ENCODE measurements at regions of chr17 and their contacts with region 1.

Region 1: GRCh38 chr17:48295362-48296288 is 134.4 kb downstream of the SKAP1 start:
- DNase-seq: peak; percentile 63
- H3K4me3 ChIP-seq: peak overlapping the region; percentile 10
- H3K27ac ChIP-seq: no peak overlapping the region
- H3K4me1 ChIP-seq: peaks cover 13% of the 10 kb centered on the region
- CTCF ChIP-seq: no peak

Region 2: DNA sequence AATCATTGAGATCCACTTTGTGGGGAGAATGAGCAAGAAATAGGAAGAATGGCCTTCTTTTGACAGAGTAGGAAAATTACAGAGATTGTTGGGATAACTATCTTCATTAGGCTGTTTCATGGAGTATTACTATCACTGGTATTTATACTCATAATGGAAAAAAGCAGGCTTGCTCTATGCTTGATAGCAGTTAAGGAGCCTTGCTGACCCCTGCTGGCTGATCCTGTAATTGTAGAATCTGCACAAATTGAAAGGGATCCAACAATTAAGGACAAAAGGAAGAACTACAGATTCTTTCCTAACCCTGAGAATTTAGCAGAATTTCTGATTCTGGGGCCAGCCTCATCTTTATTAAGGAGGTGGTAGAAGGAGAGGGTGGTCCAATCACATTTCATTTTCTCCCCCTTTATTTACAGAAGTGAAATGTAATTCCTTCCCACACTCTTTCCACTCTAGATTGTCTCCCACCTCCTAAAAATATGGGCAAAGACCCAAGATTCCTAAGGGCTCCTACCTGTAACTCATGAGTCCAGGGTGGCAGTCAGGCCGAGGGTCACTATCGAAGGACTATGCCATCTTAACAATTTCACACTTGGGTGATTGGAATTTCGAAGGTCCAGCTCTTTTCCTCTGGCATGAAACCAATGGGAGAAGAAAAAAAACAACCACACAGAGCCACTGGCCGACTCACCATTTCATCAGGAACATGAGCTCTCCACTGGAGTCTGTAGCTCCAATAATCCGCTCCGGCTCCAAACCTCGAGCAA is 221.1 kb before region 1 on chr17:
- CTCF ChIA-PET with region 1: no interaction called
- POLR2A ChIA-PET with region 1: no interaction called
- intact Hi-C with region 1: no loop called
- DNase-seq: peak; percentile 75
- H3K4me3 ChIP-seq: no peak overlapping the region
- H3K27ac ChIP-seq: no peak overlapping the region
- H3K4me1 ChIP-seq: no peaks in the 10 kb centered on the region
- CTCF ChIP-seq: peak; percentile 92

Region 3: DNA sequence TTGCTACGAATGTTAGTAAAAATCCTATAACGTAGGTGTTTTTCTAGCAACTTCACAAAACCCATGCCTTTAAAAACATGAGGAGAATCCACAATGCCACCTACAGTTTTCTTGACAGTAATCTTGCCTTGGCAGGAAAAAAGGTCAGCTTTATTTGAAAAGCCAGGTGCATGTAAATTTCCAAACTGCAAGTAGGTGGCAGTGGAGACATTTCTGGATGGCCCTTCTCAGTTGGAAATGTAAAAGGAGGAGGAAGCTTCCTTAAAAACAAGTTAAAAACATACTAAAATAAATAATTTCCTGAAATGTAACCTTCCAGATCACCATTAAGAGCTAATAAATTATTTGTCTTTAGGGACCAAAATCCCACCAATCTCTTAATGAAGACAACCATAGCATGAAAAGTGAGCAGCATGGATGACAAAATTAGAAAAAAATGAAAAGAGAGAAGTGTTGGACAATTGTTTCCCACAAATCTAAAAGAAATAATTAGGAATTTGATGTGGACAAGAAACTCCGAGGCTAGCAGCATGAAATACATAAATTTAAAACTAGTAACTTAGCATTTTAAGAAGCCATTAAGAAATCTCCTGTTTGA is 35.8 kb before region 1 on chr17:
- CTCF ChIA-PET with region 1: no interaction called
- POLR2A ChIA-PET with region 1: interaction called, 4 read pairs
- intact Hi-C with region 1: loop called (anchors 1 kb)
- DNase-seq: peak; percentile 41
- H3K4me3 ChIP-seq: no peak overlapping the region
- H3K27ac ChIP-seq: no peak overlapping the region
- H3K4me1 ChIP-seq: no peaks in the 10 kb centered on the region
- CTCF ChIP-seq: peak; percentile 85